ENCODE measurements at regions of chr3 and their contacts with region 1.

Region 1: DNA sequence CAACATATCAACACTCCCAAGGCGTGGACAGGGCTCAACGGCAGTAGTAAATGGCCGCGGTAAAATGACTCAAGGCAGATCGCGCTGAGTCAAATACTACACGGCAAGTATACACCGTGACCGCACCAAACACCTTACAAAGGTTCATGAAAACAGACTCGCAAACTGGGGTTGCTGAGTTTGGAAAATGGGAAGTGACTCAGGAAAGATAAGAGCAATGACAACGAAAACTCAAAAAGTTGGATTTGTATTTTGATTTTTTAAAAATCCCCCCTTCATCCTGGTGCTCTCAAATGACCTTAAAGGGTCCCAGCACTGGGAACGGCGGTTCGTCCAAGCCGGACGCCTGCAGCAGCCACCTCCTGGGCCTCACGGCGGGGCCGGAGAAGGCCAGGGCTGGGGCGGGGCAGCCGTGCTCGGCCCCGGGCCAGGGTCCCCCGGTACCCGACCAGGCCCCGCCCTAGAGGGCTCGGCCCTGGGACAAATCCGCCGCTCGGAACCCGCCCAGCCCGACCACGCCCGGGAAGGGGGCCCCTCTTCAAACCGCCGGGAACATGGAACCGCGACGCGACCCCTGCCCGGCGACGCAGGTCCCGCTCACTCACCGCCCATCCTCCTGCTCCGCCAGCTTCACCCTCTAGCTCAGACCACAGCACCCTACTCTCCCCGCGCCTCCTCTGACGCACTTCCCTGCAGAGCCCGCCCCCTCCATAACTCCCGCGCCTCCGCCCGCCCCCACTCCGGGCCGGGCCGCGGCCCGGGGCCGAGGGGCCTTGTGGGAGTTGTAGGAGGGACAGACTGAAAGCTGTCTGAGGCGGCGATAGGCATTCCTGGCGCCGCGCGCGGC is at the start of gene CLDND1:
- DNase-seq: peak; percentile 90 to 97 (median 94)
- ATAC-seq: peak; percentile 96
- H3K4me3 ChIP-seq: peak within 1 kb of the TSS; percentile 68
- H3K4me3 Mint-ChIP-seq: peak within 1 kb of the TSS; percentile 95
- H3K27ac ChIP-seq: peak within 1 kb of the TSS; percentile 66 to 84
- H3K27ac Mint-ChIP-seq: peak within 1 kb of the TSS; percentile 79
- H3K4me1 ChIP-seq: peaks cover 23% of the 10 kb centered on the region
- H3K4me1 Mint-ChIP-seq: peaks cover 55% of the 10 kb centered on the region
- H3K27me3 ChIP-seq: no peaks in the 10 kb centered on the region
- H3K27me3 Mint-ChIP-seq: no peaks in the 10 kb centered on the region
- CTCF ChIP-seq: no peak
- total RNA-seq, gene CLDND1: 168 to 185 TPM

Region 2: DNA sequence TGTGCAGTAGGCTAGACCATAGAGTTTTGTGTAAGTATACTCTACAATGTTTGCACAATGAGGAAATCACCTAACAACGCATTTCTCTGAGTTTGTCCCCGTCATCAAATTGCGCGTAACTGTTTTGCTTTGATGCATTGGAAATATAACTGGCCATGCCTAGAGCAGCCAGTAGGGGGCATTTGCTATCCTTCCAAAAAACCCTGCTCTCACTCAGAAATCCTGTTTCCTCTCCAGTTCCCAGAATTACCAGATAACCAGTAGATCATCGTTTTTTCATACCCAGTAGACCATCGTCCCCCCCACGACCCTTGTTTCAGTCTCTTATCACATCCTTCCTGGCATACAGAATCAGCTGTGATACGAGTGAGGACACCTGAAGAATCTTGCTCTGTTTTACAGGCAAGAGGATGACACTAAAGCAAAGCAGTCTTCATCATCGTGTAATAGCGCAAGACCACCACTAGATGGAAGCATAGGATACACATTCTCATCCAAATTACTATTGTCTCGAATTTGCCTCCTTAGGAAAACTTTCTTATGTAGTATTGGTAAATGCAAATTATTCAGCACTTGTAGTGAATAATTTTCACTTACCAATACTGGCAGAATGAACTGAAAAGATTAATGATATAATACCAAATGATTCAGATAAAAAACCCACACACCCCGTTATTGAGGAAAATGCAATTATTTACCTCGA is 483.0 kb before region 1 on chr3:
- CTCF ChIA-PET with region 1: no interaction called
- POLR2A ChIA-PET with region 1: interaction called, 5 read pairs
- intact Hi-C with region 1: loop called (anchors 2 to 10 kb)
- DNase-seq: peak; percentile 40 to 91 (median 62)
- ATAC-seq: peak; percentile 93
- H3K4me3 ChIP-seq: peak overlapping the region; percentile 45
- H3K4me3 Mint-ChIP-seq: peak overlapping the region; percentile 72
- H3K27ac ChIP-seq: peak overlapping the region; percentile 59 to 70
- H3K27ac Mint-ChIP-seq: peak overlapping the region; percentile 90
- H3K4me1 ChIP-seq: no peaks in the 10 kb centered on the region
- H3K4me1 Mint-ChIP-seq: no peaks in the 10 kb centered on the region
- H3K27me3 ChIP-seq: no peaks in the 10 kb centered on the region
- H3K27me3 Mint-ChIP-seq: peaks cover 15% of the 10 kb centered on the region
- CTCF ChIP-seq: peak; percentile 98

Region 3: DNA sequence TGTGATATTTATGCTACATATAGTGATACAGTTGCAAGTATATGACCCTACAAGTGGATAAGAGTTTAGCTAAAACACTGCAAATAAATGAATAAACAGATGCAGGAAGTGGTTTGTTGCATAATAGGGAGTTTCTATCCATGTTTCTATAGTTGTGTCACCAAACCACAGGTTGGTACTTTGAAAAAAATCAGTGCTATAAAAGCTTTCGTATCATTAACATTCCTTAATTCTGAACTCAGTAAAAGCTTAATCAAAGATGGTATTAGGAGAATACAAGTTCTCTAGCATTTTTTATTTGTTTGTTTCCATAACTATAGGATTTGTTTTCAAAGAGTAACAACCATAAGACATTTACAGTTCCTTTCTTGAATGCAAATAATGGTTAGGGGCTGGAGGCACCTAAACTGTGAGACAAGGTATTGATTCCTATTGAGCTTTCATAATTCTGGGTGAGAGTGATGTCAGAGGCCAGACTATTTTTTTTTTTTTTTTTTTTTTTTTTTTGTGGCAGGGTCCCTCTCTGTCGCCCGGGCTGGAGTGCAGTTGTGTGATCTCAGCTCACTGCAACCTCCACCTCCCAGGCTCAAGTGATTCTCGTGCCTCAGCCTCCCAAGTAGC is 41.3 kb after region 1 on chr3:
- CTCF ChIA-PET with region 1: interaction called, 3 read pairs
- POLR2A ChIA-PET with region 1: interaction called, 169 read pairs
- intact Hi-C with region 1: loop called in 1 of 2 experiments (anchors 1 kb)
- DNase-seq: peak in 8 of 14 experiments; percentile 10 to 90 (median 32)
- ATAC-seq: peak; percentile 70
- H3K4me3 ChIP-seq: no peak overlapping the region
- H3K4me3 Mint-ChIP-seq: peak overlapping the region; percentile 84
- H3K27ac ChIP-seq: peak overlapping the region; percentile 77 to 90
- H3K27ac Mint-ChIP-seq: peak overlapping the region; percentile 100
- H3K4me1 ChIP-seq: peaks cover 46% of the 10 kb centered on the region
- H3K4me1 Mint-ChIP-seq: peaks cover 83% of the 10 kb centered on the region
- H3K27me3 ChIP-seq: no peaks in the 10 kb centered on the region
- H3K27me3 Mint-ChIP-seq: no peaks in the 10 kb centered on the region
- CTCF ChIP-seq: no peak

Region 4: GRCh38 chr3:98593046-98593936 is 70.8 kb after region 1 on chr3 and contains the start of gene CPOX:
- CTCF ChIA-PET with region 1: interaction called, 3 read pairs
- POLR2A ChIA-PET with region 1: interaction called, 67 read pairs
- intact Hi-C with region 1: loop called (anchors 2 kb)
- DNase-seq: peak; percentile 61 to 91 (median 79)
- ATAC-seq: peak; percentile 96
- H3K4me3 ChIP-seq: peak within 1 kb of the TSS; percentile 63
- H3K4me3 Mint-ChIP-seq: peak within 1 kb of the TSS; percentile 94
- H3K27ac ChIP-seq: peak within 1 kb of the TSS in 1 of 2 donors; percentile 19
- H3K27ac Mint-ChIP-seq: peak within 1 kb of the TSS; percentile 82
- H3K4me1 ChIP-seq: peaks cover 16% of the 10 kb centered on the region
- H3K4me1 Mint-ChIP-seq: peaks cover 35% of the 10 kb centered on the region
- H3K27me3 ChIP-seq: no peaks in the 10 kb centered on the region
- H3K27me3 Mint-ChIP-seq: no peaks in the 10 kb centered on the region
- CTCF ChIP-seq: no peak
- total RNA-seq, gene CPOX: 7.0 to 10.5 TPM

Region 5: DNA sequence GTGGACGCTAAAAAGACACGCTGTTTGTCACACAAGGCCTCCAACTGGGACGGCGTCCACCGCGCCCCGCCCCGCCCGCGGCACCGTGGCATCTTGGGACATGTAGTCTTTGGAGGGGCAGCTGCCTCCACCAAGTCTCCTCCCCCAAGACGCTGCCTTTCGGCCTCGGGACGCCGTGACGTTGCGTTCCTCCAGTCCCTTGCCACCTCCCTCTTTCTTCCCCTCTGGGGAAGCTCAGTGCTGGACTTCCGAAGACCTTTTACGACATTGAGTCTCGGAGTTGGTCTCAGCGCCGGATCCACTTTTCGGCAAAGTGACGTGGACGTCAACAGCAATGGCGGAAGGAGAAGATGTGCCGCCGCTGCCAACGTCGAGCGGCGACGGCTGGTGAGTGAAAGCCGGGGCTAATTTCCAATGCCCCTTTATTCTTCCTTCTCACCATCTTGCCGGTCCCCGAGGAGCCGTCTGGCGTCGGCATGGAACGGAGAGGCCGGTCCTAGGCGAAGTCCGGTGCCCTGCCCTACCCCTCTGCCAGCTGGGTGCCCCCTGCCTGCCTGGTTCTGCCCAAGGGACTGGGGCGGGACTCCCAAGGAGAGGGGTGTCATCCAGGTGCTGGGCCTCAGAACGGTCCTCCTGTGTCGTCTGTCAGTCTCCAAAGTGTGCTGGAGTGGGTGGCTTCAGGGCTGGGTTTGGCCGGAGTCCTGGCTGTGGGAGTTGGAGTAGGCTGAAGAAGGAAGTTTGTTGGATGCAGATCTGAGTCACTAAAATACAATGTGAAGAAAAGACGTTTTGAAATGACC is 1738.4 kb after region 1 on chr3 and contains the start of gene TBC1D23:
- CTCF ChIA-PET with region 1: no interaction called
- POLR2A ChIA-PET with region 1: interaction called, 7 read pairs
- intact Hi-C with region 1: loop called (anchors 5 kb)
- DNase-seq: peak; percentile 93 to 99 (median 96)
- ATAC-seq: peak; percentile 99
- H3K4me3 ChIP-seq: peak within 1 kb of the TSS; percentile 96
- H3K4me3 Mint-ChIP-seq: peak within 1 kb of the TSS; percentile 96
- H3K27ac ChIP-seq: peak within 1 kb of the TSS; percentile 78 to 97
- H3K27ac Mint-ChIP-seq: peak within 1 kb of the TSS; percentile 94
- H3K4me1 ChIP-seq: peaks cover 26% of the 10 kb centered on the region
- H3K4me1 Mint-ChIP-seq: peaks cover 64% of the 10 kb centered on the region
- H3K27me3 ChIP-seq: no peaks in the 10 kb centered on the region
- H3K27me3 Mint-ChIP-seq: no peaks in the 10 kb centered on the region
- CTCF ChIP-seq: no peak
- total RNA-seq, gene TBC1D23: 31.8 to 34.8 TPM